H1 (cell line): ENCODE measurements at regions of chr5 and their contacts with region 1.

Region 1: DNA sequence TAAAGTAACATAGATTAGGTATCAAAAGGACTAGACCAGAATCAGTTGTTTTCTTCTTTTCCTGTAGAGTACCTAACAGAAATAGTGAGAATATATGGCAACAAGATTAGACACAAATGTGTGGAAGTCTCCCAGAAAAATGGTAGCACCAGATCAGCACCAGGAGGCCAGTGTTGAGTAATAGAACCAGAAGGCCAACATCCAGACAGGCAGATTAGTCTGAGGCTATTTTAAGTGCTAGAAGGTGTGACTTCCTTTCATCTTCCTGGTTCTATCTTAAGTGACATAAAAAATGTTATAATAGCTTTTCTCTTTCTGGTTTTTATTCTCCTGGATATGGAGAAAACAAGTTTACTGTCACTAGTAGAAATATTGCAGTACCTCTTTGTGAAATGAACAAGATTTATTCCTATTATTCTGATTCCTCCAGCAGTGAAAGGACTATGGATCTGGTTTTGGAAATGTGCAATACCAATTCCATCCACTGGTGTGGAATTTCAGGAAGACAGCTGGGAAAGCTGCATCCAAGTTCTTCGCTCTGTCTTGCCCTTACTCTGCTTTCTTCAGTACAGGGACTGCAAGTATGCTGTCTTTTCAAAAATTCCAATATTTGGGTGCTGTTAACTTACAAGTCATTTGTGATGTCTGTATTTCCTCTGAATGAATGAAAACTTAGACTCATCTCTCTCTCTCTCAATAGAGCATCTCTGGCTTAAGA is 39.1 kb downstream of the SHLD3 start:
- DNase-seq: peak in 1 of 2 experiments; percentile 3
- H3K4me3 ChIP-seq: no peak overlapping the region
- H3K27ac ChIP-seq: no peak overlapping the region
- H3K4me1 ChIP-seq: no peaks in the 10 kb centered on the region
- H3K27me3 ChIP-seq: no peaks in the 10 kb centered on the region
- CTCF ChIP-seq: peak in 2 of 3 experiments; percentile 21 to 46; a peak in 2 of 4 replicates
- EP300 ChIP-seq: no peak
- POLR2A ChIP-seq: no peak
- RAD21 ChIP-seq: peak; percentile 23 to 25; a peak in 1 of 4 replicates

Region 2: GRCh38 chr5:65674749-65675148 is 10.8 kb after region 1 on chr5:
- CTCF ChIA-PET with region 1: interaction called, 43 read pairs
- POLR2A ChIA-PET with region 1: interaction called, 3 read pairs
- DNase-seq: no peak
- H3K4me3 ChIP-seq: no peak overlapping the region
- H3K27ac ChIP-seq: no peak overlapping the region
- H3K4me1 ChIP-seq: no peaks in the 10 kb centered on the region
- H3K27me3 ChIP-seq: no peaks in the 10 kb centered on the region
- CTCF ChIP-seq: no peak
- EP300 ChIP-seq: no peak
- POLR2A ChIP-seq: no peak
- RAD21 ChIP-seq: no peak

Region 3: GRCh38 chr5:65734921-65735320 is 71.0 kb after region 1 on chr5:
- CTCF ChIA-PET with region 1: no interaction called
- POLR2A ChIA-PET with region 1: no interaction called
- DNase-seq: no peak
- H3K4me3 ChIP-seq: no peak overlapping the region
- H3K27ac ChIP-seq: no peak overlapping the region
- H3K4me1 ChIP-seq: no peaks in the 10 kb centered on the region
- H3K27me3 ChIP-seq: no peaks in the 10 kb centered on the region
- CTCF ChIP-seq: no peak
- EP300 ChIP-seq: no peak
- POLR2A ChIP-seq: no peak
- RAD21 ChIP-seq: no peak